ENCODE measurements at regions of chr7 and their contacts with region 1.

Region 1: DNA sequence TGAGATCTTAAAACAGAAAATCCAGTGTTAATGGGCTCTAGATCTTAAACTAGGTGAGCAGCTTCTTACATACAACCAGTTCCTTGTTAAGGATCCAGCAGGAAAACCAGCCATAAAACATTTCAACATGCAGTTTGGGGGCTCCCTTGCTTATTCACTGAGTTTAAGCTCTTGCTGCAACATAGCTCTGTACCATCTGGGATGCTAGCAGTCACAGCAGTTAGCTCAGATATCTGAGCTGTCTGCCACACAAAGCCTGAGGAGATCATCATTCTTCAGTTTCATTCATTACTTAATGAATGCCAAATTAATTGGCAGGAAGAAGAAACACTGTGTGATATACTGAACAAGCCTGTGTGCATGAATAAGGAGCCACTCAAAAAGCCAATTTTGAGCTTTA is 62.8 kb downstream of the PODXL start:
- DNase-seq: no peak
- H3K4me3 Mint-ChIP-seq: no peak overlapping the region
- H3K27ac Mint-ChIP-seq: no peak overlapping the region
- H3K4me1 Mint-ChIP-seq: no peaks in the 10 kb centered on the region
- H3K27me3 Mint-ChIP-seq: no peaks in the 10 kb centered on the region
- CTCF ChIP-seq: no peak

Region 2: DNA sequence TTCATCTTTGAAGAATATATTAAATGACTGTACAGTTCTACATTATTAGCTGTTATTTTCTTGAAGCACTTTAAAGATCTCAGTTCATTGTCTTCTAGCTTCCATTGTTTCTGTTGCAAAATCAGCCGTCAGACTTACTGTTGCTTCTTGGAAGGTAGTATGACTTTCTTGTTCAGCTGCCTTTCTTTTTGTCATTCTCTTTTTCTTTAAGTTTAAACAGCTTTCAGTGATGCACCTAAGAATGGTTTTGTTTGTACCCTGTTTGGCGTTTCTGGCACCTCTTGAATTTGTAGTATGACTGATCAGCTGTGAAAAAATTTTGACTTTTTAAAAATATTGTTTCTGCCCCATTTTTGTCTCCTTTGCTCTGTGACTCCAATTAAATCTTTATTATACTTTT is 156.6 kb before region 1 on chr7:
- CTCF ChIA-PET with region 1: no interaction called
- POLR2A ChIA-PET with region 1: no interaction called
- intact Hi-C with region 1: no loop called
- DNase-seq: peak; percentile 48
- H3K4me3 Mint-ChIP-seq: no peak overlapping the region
- H3K27ac Mint-ChIP-seq: no peak overlapping the region
- H3K4me1 Mint-ChIP-seq: no peaks in the 10 kb centered on the region
- H3K27me3 Mint-ChIP-seq: no peaks in the 10 kb centered on the region
- CTCF ChIP-seq: no peak

Region 3: DNA sequence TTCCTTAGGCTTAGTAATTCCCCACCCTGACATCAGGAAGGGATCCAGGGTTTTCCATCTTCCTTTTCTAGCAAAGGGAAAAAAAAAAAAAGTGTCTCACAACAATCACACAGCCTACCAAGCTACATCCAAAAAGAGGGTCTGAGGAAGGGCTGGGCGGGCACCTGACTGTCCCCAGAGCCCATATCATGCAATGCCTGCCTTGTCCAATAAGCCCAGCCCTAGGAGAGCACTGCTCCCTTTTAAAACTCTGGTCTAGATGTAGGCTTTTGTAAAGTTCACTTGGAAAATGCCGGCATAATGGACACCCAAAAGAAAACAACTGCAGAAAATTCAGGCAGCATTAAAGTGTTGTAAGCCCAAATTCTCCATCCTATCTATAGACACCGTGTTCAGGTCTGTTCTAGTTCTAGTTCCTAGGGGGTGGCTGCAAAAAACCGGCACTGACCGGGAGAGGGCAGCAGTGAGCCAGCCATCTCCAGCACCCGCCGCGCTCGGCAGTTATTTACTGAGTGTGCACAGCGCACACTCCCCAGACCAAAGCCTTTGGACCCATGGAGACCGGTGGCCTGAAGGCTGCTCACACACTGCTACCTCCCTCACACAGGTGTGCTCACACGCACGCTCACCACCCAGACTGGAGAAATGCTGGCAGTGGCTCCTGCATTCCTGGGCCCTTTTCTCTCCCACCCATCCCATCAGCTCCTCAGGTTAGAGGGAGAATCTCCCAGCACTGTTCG is 14.2 kb after region 1 on chr7:
- CTCF ChIA-PET with region 1: interaction called, 24 read pairs
- POLR2A ChIA-PET with region 1: interaction called, 3 read pairs
- intact Hi-C with region 1: no loop called
- DNase-seq: peak; percentile 79
- H3K4me3 Mint-ChIP-seq: no peak overlapping the region
- H3K27ac Mint-ChIP-seq: no peak overlapping the region
- H3K4me1 Mint-ChIP-seq: peaks cover 8% of the 10 kb centered on the region
- H3K27me3 Mint-ChIP-seq: no peaks in the 10 kb centered on the region
- CTCF ChIP-seq: peak; percentile 85

Region 4: GRCh38 chr7:131674131-131674530 is 180.6 kb after region 1 on chr7:
- CTCF ChIA-PET with region 1: no interaction called
- POLR2A ChIA-PET with region 1: no interaction called
- intact Hi-C with region 1: no loop called
- DNase-seq: no peak
- H3K4me3 Mint-ChIP-seq: no peak overlapping the region
- H3K27ac Mint-ChIP-seq: no peak overlapping the region
- H3K4me1 Mint-ChIP-seq: no peaks in the 10 kb centered on the region
- H3K27me3 Mint-ChIP-seq: peaks cover 81% of the 10 kb centered on the region
- CTCF ChIP-seq: no peak

Measured in MCF 10A (cell line).